Thyroid gland (tissue), 4 donors: ENCODE measurements at regions of chr4 and their contacts with region 1.

Region 1: DNA sequence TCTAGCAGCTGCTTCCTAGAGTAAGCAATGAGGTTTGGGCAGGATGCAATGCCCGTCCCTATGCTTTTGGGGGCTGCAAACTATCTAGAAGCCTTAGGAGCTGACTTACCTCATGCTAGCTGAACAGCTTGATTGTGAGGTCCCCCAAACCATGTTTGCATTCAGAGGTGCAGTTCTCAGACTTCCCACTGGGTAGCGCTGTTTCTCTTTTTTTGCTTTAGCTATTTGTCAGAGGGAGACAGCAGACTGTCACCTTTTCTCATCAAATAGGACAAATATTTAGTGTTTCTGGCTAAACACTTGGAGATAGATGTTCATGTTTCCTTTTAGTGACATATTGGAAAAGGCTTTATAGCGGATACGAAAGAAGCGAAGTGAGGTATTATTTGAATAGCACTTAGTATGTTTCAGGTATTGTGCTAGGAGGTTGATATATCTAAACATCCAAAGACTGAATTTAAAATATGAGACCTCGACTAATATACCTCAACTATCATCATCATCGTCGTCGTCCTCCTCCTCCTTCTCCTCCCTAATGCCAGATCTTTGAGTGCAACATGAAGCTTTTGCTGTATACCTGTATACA is 18.7 kb upstream of the TMEM192 start:
- DNase-seq: peak; percentile 61 to 71
- H3K4me3 ChIP-seq: no peak overlapping the region
- H3K27ac ChIP-seq: no peak overlapping the region
- H3K4me1 ChIP-seq: no peaks in the 10 kb centered on the region
- H3K27me3 ChIP-seq: no peaks in the 10 kb centered on the region
- CTCF ChIP-seq: peak; percentile 79 to 95 (median 88)
- POLR2A ChIP-seq: no peak

Region 2: DNA sequence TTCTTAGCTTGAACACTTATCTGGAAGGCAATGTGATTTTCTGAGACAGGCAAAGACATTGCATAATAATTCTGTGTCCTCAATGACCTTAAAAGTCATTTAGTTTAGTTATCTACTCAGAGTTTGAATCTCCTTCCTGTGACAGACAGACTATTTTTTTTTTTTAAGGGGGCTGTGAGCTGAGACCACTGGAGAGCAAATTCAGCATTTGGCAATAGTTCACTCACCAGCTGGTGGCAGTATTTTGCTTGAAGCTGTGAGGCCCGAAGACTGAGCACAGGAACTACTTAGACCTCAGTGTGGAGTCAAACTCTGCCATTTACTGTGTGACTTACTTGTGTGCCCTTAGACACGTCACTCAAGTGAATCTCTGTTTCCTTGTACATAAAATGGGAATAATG is 224.6 kb after region 1 on chr4:
- intact Hi-C with region 1: loop called (anchors 10 kb)
- DNase-seq: peak; percentile 41 to 60
- H3K4me3 ChIP-seq: no peak overlapping the region
- H3K27ac ChIP-seq: no peak overlapping the region
- H3K4me1 ChIP-seq: no peaks in the 10 kb centered on the region
- H3K27me3 ChIP-seq: no peaks in the 10 kb centered on the region
- CTCF ChIP-seq: peak in 4 of 6 experiments; percentile 35 to 74 (median 61)
- POLR2A ChIP-seq: no peak

Region 3: GRCh38 chr4:165464813-165465381 is 333.6 kb after region 1 on chr4:
- intact Hi-C with region 1: loop called (anchors 2 kb)
- DNase-seq: peak in 1 of 2 donors; percentile 15
- H3K4me3 ChIP-seq: no peak overlapping the region
- H3K27ac ChIP-seq: no peak overlapping the region
- H3K4me1 ChIP-seq: no peaks in the 10 kb centered on the region
- H3K27me3 ChIP-seq: no peaks in the 10 kb centered on the region
- CTCF ChIP-seq: peak; percentile 43 to 84 (median 76)
- POLR2A ChIP-seq: no peak

Region 4: GRCh38 chr4:165505991-165506837 is 374.9 kb after region 1 on chr4:
- intact Hi-C with region 1: no loop called
- DNase-seq: no peak
- H3K4me3 ChIP-seq: no peak overlapping the region
- H3K27ac ChIP-seq: no peak overlapping the region
- H3K4me1 ChIP-seq: no peaks in the 10 kb centered on the region
- H3K27me3 ChIP-seq: no peaks in the 10 kb centered on the region
- CTCF ChIP-seq: no peak
- POLR2A ChIP-seq: no peak